ENCODE measurements at regions of chr14 and their contacts with region 1.

Region 1: GRCh38 chr14:24327303-24327702 is 7.6 kb downstream of the ADCY4 start:
- DNase-seq: no peak
- ATAC-seq: no peak
- H3K4me3 ChIP-seq: no peak overlapping the region
- H3K27ac ChIP-seq: no peak overlapping the region
- H3K4me1 ChIP-seq: no peaks in the 10 kb centered on the region
- H3K27me3 ChIP-seq: no peaks in the 10 kb centered on the region
- CTCF ChIP-seq: no peak

Region 2: GRCh38 chr14:24215495-24216344 is 111.6 kb before region 1 on chr14 and contains the start of gene MDP1:
- CTCF ChIA-PET with region 1: interaction called, 10 read pairs
- POLR2A ChIA-PET with region 1: no interaction called
- in situ Hi-C with region 1: no loop called
- intact Hi-C with region 1: no loop called
- DNase-seq: no peak
- ATAC-seq: peak; percentile 86
- H3K4me3 ChIP-seq: peak within 1 kb of the TSS; percentile 74 to 77
- H3K27ac ChIP-seq: peak within 1 kb of the TSS; percentile 89
- H3K4me1 ChIP-seq: peaks cover 9% of the 10 kb centered on the region
- H3K27me3 ChIP-seq: no peaks in the 10 kb centered on the region
- CTCF ChIP-seq: peak; percentile 82
- total RNA-seq, gene MDP1: 8.9 TPM

Region 3: DNA sequence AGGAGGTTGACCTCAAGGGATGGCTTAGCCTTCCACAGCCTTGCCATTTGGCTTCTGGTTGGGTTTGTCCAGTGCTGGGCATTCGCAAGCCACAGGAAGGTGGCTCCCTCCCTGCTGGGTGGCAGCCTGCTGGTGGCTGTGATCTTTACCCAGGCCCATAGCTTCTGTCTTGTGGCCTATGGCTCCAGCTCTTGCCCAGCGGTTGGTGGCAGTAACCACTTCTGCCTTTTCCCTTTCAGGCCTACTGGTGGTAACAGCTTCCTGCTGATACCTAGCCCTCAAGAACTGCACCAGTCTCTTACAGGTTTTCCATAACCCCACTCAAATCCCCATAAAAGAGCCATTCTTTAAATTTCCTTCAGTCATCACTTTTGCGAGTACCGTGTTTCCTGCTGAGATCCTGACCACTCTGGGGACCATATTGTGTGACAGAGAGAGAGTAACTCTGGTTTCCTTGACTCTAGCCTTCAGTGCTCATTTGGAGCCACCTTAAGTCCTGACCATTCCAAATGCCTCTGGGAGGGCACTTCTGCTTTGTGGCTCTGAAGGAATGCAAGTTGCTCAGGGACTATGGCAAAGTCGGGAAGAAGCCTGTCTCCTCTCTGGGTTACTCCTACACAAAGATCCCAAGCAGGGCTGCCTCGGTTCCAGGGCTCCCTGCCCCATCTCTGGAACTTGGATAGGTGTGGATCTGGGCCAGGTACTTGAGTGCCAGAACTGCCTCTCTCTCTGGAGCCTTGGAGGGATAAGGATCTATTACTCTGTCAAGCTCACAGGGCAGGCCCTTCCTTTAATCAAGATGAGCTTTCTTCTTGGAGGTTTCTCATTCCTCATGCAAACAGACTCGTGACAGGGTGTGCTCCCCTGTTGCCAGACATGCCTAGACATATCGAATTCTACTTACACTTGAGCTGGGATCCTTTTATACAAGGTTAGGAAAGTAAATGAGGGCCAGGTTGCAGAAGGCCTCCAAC is 68.6 kb after region 1 on chr14:
- CTCF ChIA-PET with region 1: no interaction called
- POLR2A ChIA-PET with region 1: no interaction called
- in situ Hi-C with region 1: no loop called
- intact Hi-C with region 1: no loop called
- DNase-seq: no peak
- ATAC-seq: no peak
- H3K4me3 ChIP-seq: no peak overlapping the region
- H3K27ac ChIP-seq: no peak overlapping the region
- H3K4me1 ChIP-seq: no peaks in the 10 kb centered on the region
- H3K27me3 ChIP-seq: peaks cover 2% of the 10 kb centered on the region; the same call in 1 of the 2 replicates
- CTCF ChIP-seq: no peak

Measured in Panc1 (cell line).